ENCODE measurements at regions of chr13 and their contacts with region 1.

Region 1: DNA sequence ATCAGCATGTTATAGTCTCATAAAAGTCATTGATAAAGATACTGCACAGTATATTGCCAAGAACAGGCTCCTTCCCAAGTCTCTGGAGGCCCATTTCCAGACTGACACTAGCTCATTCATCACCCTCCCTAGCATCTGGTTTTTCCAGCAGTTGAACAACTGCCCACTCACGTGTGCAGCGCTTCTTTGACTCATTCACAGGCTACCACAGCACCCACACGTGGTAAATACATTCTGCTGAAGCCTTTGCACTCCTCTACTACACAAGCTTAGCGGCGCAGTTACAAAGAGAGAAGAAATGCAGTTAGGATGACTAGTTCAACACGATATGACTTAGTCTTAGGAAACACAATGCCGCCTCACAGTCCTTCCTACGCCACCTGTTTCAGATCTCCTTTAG is 87.7 kb downstream of the DOCK9 start:
- DNase-seq: peak in 8 of 10 donors; percentile 33 to 87 (median 56)

Region 2: DNA sequence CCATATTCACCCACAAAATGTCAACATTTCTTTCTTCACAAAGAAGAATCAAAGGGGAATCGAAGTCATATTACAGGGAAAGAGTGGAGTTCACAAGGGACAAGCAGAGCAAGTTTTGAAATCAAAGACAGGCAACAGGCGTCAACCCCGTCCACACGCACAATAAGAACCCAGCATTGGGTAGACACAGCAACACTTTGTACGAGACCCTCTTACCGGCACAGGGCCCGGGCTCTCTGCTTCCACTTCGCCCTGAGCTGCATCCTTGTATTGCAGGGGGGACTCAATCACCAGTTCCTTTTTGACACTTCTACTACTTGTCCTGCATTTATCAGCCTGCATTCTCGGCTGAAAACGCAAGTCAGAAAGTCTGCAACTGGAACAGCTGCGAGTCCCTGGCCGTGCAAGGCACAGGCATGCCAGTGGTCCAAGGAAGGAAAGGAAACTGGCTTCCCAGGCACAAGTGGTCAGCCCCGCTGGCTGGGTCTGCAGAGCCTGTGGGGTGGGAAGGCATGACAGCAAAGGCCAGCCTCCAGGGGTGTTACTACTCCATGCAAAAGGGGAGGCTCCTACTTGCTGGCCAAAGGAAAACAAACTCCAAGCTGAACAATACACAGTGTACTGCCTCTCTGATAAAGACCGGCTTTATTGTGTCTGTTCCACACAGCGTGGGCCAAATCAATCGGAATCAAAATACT is 87.5 kb after region 1 on chr13 and contains the start of gene DOCK9:
- intact Hi-C with region 1: loop called (anchors 5 kb)
- DNase-seq: peak; percentile 59 to 97 (median 78)

Measured in posterior cingulate gyrus (tissue), 11 donors.